Activated CD4-positive, alpha-beta memory T cell treated with anti-CD3 and anti-CD28 coated beads, Interleukin-2, amount 10 ng/mL, durations not matched to agents 7 days and 5 days (primary cell): ENCODE measurements at regions of chr6 and their contacts with region 1.

Region 1: GRCh38 chr6:11207199-11207968 is 25.1 kb downstream of the NEDD9 start:
- DNase-seq: no peak
- H3K4me3 Mint-ChIP-seq: no peak overlapping the region
- H3K27ac Mint-ChIP-seq: no peak overlapping the region
- H3K4me1 Mint-ChIP-seq: peaks cover 57% of the 10 kb centered on the region
- H3K27me3 Mint-ChIP-seq: no peaks in the 10 kb centered on the region

Region 2: DNA sequence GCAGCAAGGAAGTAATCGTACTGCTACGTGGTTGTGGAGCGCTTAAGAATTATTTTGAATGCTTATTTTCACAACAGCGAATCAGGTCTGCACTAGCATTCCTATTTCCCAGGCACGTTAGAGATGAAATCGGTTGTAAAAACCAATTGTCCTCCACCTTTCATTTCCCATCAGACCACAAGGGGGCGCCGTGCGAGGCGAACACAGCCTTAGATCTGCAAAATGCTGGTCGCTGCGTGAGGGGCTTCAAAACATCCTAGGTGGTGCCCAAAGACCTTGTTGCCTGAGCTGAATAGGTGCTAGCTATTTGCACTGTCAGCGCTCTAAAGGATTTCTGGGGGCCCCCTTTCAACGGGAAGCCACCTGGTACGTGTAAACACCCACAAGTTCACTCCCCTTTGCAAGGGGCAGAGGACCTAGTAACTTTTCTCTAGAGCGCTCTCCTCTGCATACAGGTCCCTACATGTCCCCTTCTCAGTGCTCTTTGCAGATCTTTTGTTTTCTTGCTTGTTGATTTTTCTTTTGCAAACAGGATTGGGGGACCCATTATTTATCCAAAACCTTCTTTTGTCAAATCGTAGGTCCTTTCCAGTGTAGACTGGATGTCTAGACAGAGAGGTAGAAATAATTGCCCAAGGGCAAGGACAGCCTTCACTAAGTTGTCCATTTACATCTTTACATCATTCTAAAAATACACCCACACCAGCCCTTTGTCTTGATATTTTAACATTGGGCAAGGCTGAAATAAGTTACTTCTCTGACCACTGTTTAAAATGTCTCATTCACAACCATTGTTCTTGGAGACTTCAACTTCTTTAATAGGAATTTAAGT is 34.7 kb before region 1 on chr6:
- CTCF ChIA-PET with region 1: interaction called, 12 read pairs
- POLR2A ChIA-PET with region 1: no interaction called
- DNase-seq: peak; percentile 77
- H3K4me3 Mint-ChIP-seq: no peak overlapping the region
- H3K27ac Mint-ChIP-seq: no peak overlapping the region
- H3K4me1 Mint-ChIP-seq: peaks cover 10% of the 10 kb centered on the region
- H3K27me3 Mint-ChIP-seq: no peaks in the 10 kb centered on the region

Region 3: DNA sequence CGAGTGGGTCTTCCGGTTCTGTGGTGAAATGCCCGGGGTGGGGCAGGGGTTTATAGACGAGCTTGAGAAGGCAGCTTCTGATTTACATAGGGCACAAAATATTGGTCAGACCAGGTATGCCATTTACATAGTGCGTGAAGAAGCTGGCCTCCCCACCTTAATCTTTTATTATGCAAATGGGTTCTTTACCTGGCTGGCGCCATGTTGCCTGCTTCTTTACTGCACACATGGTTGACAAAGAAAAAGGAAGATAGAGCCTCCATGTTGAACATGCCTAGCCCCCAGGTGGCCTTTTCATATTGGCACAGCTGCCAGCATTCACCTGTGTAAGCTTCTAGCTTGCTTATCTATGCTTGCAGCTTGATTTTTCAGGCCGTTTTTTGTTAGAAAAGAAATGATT is 1785.4 kb after region 1 on chr6:
- CTCF ChIA-PET with region 1: no interaction called
- POLR2A ChIA-PET with region 1: no interaction called
- DNase-seq: no peak
- H3K4me3 Mint-ChIP-seq: no peak overlapping the region
- H3K27ac Mint-ChIP-seq: no peak overlapping the region
- H3K4me1 Mint-ChIP-seq: no peaks in the 10 kb centered on the region
- H3K27me3 Mint-ChIP-seq: peaks cover 4% of the 10 kb centered on the region